Naive thymus-derived CD4-positive, alpha-beta T cell (primary cell): ENCODE measurements at regions of chr20 and their contacts with region 1.

Region 1: DNA sequence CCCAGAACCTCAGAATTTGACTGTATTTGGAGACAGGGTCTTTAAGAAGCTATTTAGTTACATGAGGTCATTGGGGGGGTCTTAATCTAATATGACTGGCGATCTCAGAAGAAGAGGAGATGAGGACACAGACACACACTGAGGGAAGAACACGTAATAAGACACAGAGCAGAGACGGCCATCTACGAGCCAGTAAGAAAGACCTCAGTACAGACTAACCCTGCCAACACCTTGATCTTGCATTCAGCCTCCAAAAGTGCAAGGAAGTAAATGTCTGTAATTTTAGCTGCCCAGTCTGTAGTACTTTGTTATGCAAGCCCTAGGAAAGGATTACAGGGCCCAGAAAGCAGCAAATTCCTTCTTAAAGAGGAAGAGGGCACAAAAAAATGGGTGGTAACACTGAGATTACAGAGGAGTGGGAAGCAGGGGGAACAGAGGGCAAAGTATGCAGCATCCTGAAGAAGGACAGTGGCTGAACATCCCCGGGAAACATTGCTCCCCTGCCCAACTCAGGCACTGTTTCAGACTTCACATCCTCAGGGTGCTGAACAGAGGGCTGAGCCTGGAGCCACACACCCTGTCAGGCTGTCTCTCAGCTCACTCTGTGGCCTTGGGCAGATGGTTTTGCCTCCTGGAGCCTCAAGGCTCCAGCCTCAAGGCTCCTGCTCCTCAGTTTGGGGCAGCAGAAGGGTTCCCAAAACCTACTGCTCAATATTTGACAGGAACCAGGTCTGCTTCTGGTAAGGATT is 27.9 kb upstream of the SIRPG start:
- DNase-seq: peak in 1 of 9 donors; percentile 16
- ATAC-seq: peak; percentile 50
- H3K4me3 ChIP-seq: peak overlapping the region; percentile 65
- H3K4me3 Mint-ChIP-seq: peak overlapping the region; percentile 82 to 97 (median 92)
- H3K27ac ChIP-seq: peak overlapping the region; percentile 80
- H3K27ac Mint-ChIP-seq: peak overlapping the region; percentile 87 to 96 (median 94)
- H3K4me1 ChIP-seq: peaks cover 4 to 28% of the 10 kb centered on the region in 2 donors
- H3K4me1 Mint-ChIP-seq: peaks cover 39 to 89% (median 82%) of the 10 kb centered on the region in 7 donors
- H3K27me3 ChIP-seq: no peaks in the 10 kb centered on the region
- H3K27me3 Mint-ChIP-seq: no peaks in the 10 kb centered on the region

Region 2: GRCh38 chr20:1651268-1652058 is 34.0 kb before region 1 on chr20:
- CTCF ChIA-PET with region 1: interaction called, 4 read pairs
- POLR2A ChIA-PET with region 1: interaction called, 171 read pairs
- intact Hi-C with region 1: loop called in 1 of 2 experiments (anchors 5 kb)
- DNase-seq: no peak
- ATAC-seq: no peak
- H3K4me3 ChIP-seq: peak overlapping the region; percentile 8
- H3K4me3 Mint-ChIP-seq: peak overlapping the region; percentile 46 to 88 (median 74)
- H3K27ac ChIP-seq: peak overlapping the region; percentile 41
- H3K27ac Mint-ChIP-seq: peak overlapping the region in 8 of 9 donors; percentile 33 to 93 (median 88)
- H3K4me1 ChIP-seq: peaks cover 56 to 66% of the 10 kb centered on the region in 2 donors
- H3K4me1 Mint-ChIP-seq: peaks cover 27 to 95% (median 86%) of the 10 kb centered on the region in 7 donors
- H3K27me3 ChIP-seq: no peaks in the 10 kb centered on the region
- H3K27me3 Mint-ChIP-seq: no peaks in the 10 kb centered on the region

Region 3: GRCh38 chr20:1663917-1664316 is 21.6 kb before region 1 on chr20:
- CTCF ChIA-PET with region 1: no interaction called
- POLR2A ChIA-PET with region 1: interaction called, 171 read pairs
- intact Hi-C with region 1: no loop called
- DNase-seq: peak in 1 of 9 donors; percentile 29
- ATAC-seq: peak; percentile 53
- H3K4me3 ChIP-seq: peak overlapping the region; percentile 57
- H3K4me3 Mint-ChIP-seq: peak overlapping the region; percentile 69 to 96 (median 84)
- H3K27ac ChIP-seq: peak overlapping the region; percentile 70
- H3K27ac Mint-ChIP-seq: peak overlapping the region; percentile 70 to 98 (median 91)
- H3K4me1 ChIP-seq: peaks cover 83 to 89% of the 10 kb centered on the region in 2 donors
- H3K4me1 Mint-ChIP-seq: peaks cover 80 to 100% (median 92%) of the 10 kb centered on the region in 7 donors
- H3K27me3 ChIP-seq: no peaks in the 10 kb centered on the region
- H3K27me3 Mint-ChIP-seq: no peaks in the 10 kb centered on the region

Region 4: DNA sequence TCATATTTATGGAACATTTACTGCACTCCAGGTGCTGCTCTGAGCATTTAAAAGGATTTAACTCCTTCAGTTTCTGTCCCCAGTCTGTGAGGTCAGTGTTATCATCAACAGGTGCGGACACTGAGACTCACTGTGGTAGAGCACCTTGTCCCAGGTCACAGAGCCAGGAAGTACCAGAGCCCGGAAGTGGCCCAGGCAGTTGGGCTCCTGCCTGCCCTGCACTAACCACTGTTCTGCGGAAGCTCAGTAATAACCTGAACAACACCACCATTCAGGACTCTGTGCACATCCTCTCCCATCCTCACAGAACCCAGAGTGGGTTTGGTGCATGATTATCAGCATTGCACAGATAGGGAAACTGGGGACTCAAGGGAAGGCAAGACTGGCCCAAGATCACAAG is 11.1 kb before region 1 on chr20:
- CTCF ChIA-PET with region 1: interaction called, 3 read pairs
- POLR2A ChIA-PET with region 1: interaction called, 32 read pairs
- intact Hi-C with region 1: loop called (anchors 1 kb)
- DNase-seq: peak in 5 of 9 donors; percentile 34 to 55 (median 36)
- ATAC-seq: peak; percentile 76
- H3K4me3 ChIP-seq: peak overlapping the region; percentile 28
- H3K4me3 Mint-ChIP-seq: peak overlapping the region; percentile 55 to 87 (median 78)
- H3K27ac ChIP-seq: peak overlapping the region; percentile 68
- H3K27ac Mint-ChIP-seq: peak overlapping the region; percentile 80 to 97 (median 92)
- H3K4me1 ChIP-seq: peaks cover 67 to 84% of the 10 kb centered on the region in 2 donors
- H3K4me1 Mint-ChIP-seq: peaks cover 58 to 100% (median 98%) of the 10 kb centered on the region in 7 donors
- H3K27me3 ChIP-seq: no peaks in the 10 kb centered on the region
- H3K27me3 Mint-ChIP-seq: no peaks in the 10 kb centered on the region

Region 5: GRCh38 chr20:2237059-2237458 is 551.6 kb after region 1 on chr20:
- CTCF ChIA-PET with region 1: no interaction called
- POLR2A ChIA-PET with region 1: no interaction called
- intact Hi-C with region 1: no loop called
- DNase-seq: no peak
- ATAC-seq: no peak
- H3K4me3 ChIP-seq: no peak overlapping the region
- H3K4me3 Mint-ChIP-seq: no peak overlapping the region
- H3K27ac ChIP-seq: no peak overlapping the region
- H3K27ac Mint-ChIP-seq: no peak overlapping the region
- H3K4me1 ChIP-seq: no peaks in the 10 kb centered on the region
- H3K4me1 Mint-ChIP-seq: peaks cover 0 to 3% (median 0%) of the 10 kb centered on the region in 7 donors
- H3K27me3 ChIP-seq: no peaks in the 10 kb centered on the region
- H3K27me3 Mint-ChIP-seq: peaks cover 0 to 9% (median 0%) of the 10 kb centered on the region in 5 donors